ENCODE measurements at regions of chr2 and their contacts with region 1.

Region 1: GRCh38 chr2:204024503-204024902 is 87.9 kb downstream of the ICOS start:
- DNase-seq: no peak
- ATAC-seq: no peak
- H3K4me3 ChIP-seq: no peak overlapping the region
- H3K27ac ChIP-seq: peak overlapping the region in 1 of 2 donors; percentile 43
- H3K4me1 ChIP-seq: peaks cover 0 to 3% of the 10 kb centered on the region in 2 donors
- H3K27me3 ChIP-seq: no peaks in the 10 kb centered on the region

Region 2: GRCh38 chr2:203887677-203888076 is 136.8 kb before region 1 on chr2:
- intact Hi-C with region 1: no loop called
- DNase-seq: no peak
- ATAC-seq: no peak
- H3K4me3 ChIP-seq: no peak overlapping the region
- H3K27ac ChIP-seq: no peak overlapping the region
- H3K4me1 ChIP-seq: no peaks in the 10 kb centered on the region
- H3K27me3 ChIP-seq: no peaks in the 10 kb centered on the region

Region 3: GRCh38 chr2:203934041-203934492 is 90.4 kb before region 1 on chr2:
- intact Hi-C with region 1: loop called in 1 of 2 experiments (anchors 5 kb)
- DNase-seq: no peak
- ATAC-seq: no peak
- H3K4me3 ChIP-seq: no peak overlapping the region
- H3K27ac ChIP-seq: peak overlapping the region; percentile 77 to 81
- H3K4me1 ChIP-seq: peaks cover 0 to 6% of the 10 kb centered on the region in 2 donors
- H3K27me3 ChIP-seq: no peaks in the 10 kb centered on the region

Region 4: DNA sequence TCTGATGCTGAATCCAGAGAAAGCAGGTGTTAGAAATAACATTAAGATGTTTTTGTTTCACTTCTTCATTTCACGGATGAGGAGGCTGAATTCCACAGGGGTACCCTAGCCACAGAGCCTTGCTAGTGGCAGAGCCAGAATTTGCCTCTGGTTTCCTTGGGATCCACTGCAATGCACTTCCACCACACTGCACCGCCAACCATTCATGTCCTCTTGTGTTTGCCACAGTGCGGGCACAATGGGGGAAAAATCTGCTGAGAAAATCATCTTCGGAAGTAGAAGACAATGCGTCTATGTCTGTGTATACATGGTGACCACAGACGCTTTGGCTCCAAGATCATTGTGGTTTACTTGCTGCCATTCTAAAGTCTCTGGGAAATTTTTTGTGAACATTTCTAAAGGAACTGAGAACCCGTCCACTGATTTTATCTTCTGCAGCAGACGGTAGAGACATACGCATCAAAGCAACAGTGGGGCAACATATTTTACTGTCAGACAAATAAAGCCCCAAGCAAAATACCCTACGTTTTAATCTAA is 73.1 kb before region 1 on chr2:
- intact Hi-C with region 1: loop called in 1 of 2 experiments (anchors 10 kb)
- DNase-seq: no peak
- ATAC-seq: no peak
- H3K4me3 ChIP-seq: no peak overlapping the region
- H3K27ac ChIP-seq: no peak overlapping the region
- H3K4me1 ChIP-seq: peaks cover 0 to 2% of the 10 kb centered on the region in 2 donors
- H3K27me3 ChIP-seq: no peaks in the 10 kb centered on the region

Region 5: DNA sequence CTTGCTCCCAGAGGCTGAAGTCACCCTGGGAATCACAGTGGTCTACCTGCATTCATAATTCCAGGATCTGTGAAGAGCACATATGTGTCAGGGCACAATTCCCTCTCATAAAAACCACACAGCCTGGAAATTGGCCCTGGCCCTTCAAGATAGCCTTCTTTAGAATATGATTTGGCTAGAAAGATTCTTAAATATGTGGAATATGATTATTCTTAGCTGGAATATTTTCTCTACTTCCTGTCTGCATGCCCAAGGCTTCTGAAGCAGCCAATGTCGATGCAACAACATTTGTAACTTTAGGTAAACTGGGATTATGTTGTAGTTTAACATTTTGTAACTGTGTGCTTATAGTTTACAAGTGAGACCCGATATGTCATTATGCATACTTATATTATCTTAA is 63.7 kb before region 1 on chr2:
- intact Hi-C with region 1: loop called (anchors 10 kb)
- DNase-seq: no peak
- ATAC-seq: no peak
- H3K4me3 ChIP-seq: no peak overlapping the region
- H3K27ac ChIP-seq: peak overlapping the region in 1 of 2 donors; percentile 76
- H3K4me1 ChIP-seq: peaks cover 0 to 8% of the 10 kb centered on the region in 2 donors
- H3K27me3 ChIP-seq: no peaks in the 10 kb centered on the region

Region 6: DNA sequence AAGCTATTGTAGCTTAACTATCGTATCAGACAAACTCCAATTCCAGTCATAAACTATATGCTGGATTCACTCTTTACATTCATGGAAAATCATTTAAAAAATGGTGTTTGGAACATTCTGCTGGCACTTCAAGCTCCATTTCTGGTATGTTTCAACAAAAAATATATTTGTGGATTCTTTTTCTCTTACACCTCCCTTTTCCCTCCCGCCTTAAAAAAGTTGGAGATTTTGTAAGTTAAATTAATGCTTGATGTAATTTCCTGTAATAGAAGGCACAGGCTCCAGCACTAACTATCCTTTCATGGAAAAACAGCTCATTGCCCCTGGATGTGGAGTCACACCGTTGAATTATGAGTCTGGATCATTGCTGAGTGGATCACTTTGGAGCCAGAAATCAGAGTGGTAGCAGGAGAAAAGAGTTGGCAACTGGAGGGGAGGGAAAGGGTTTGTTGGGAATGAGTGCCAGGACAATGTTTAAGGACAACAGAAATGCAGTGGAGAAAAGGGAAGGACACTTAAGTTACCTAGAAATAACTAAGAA is 14.9 kb after region 1 on chr2:
- intact Hi-C with region 1: no loop called
- DNase-seq: no peak
- ATAC-seq: peak; percentile 44
- H3K4me3 ChIP-seq: no peak overlapping the region
- H3K27ac ChIP-seq: no peak overlapping the region
- H3K4me1 ChIP-seq: no peaks in the 10 kb centered on the region
- H3K27me3 ChIP-seq: no peaks in the 10 kb centered on the region

Region 7: DNA sequence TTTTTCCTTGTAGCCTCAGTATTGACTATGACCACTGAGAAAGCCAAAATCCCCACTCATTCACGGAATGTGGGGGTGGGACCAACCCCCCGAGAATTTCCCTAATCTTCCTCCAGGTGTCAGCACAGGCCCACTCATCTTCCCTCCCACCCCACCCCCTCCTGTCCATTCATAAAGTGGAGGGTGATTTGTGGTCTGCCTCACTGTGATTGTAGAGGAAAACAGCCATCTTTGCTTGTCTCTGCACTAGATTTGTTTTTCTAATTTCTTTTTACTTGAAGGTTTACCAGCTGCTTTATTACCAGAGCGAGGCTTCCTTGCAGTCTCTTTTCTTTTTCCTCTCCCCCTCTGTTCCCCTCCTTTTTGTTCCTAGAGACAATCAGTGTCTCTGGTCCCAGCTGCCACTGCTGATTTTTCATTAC is 83.8 kb after region 1 on chr2:
- intact Hi-C with region 1: no loop called
- DNase-seq: no peak
- ATAC-seq: no peak
- H3K4me3 ChIP-seq: no peak overlapping the region
- H3K27ac ChIP-seq: no peak overlapping the region
- H3K4me1 ChIP-seq: peaks cover 0 to 3% of the 10 kb centered on the region in 2 donors
- H3K27me3 ChIP-seq: no peaks in the 10 kb centered on the region

Region 8: DNA sequence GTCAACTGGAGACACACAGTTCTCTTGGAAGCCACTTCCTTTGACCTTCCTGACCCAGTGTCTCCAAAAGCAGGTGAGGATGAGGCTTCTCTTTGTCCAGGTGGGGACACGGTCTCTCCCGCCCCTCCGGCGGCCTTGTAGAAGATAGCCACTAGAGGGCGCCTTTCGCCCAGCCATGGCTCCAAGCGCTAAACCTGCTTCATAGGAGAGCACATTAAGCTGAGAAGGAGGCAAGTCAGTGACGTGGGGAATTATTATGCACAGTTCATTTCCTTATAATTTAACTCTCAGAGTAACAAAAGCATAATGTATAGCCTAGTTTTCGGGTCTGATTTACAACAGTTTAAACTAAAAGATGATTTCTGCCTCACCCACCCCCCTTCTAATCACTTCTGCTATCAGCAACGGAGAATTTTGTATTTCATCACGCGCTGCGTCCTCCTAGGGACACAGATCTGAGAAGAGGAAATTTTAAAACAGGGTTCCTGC is 120.8 kb after region 1 on chr2:
- intact Hi-C with region 1: loop called in 1 of 2 experiments (anchors 10 kb)
- DNase-seq: peak; percentile 78 to 90
- ATAC-seq: peak; percentile 95
- H3K4me3 ChIP-seq: peak overlapping the region; percentile 70 to 86
- H3K27ac ChIP-seq: no peak overlapping the region
- H3K4me1 ChIP-seq: no peaks in the 10 kb centered on the region
- H3K27me3 ChIP-seq: no peaks in the 10 kb centered on the region

Region 9: GRCh38 chr2:204260162-204260877 is 235.8 kb after region 1 on chr2:
- intact Hi-C with region 1: loop called in 1 of 2 experiments (anchors 2 kb)
- DNase-seq: peak in 1 of 2 donors; percentile 74
- ATAC-seq: peak; percentile 82
- H3K4me3 ChIP-seq: no peak overlapping the region
- H3K27ac ChIP-seq: no peak overlapping the region
- H3K4me1 ChIP-seq: no peaks in the 10 kb centered on the region
- H3K27me3 ChIP-seq: no peaks in the 10 kb centered on the region

Region 10: GRCh38 chr2:204691911-204692510 is 667.5 kb after region 1 on chr2:
- intact Hi-C with region 1: loop called in 1 of 2 experiments (anchors 10 kb)
- DNase-seq: no peak
- ATAC-seq: peak; percentile 84
- H3K4me3 ChIP-seq: no peak overlapping the region
- H3K27ac ChIP-seq: no peak overlapping the region
- H3K4me1 ChIP-seq: no peaks in the 10 kb centered on the region
- H3K27me3 ChIP-seq: no peaks in the 10 kb centered on the region